Activated CD8-positive, alpha-beta T cell treated with anti-CD3 and anti-CD28 coated beads for 36 hours (primary cell): ENCODE measurements at regions of chr16 and their contacts with region 1.

Region 1: GRCh38 chr16:85821441-85822135 is 22.1 kb downstream of the COX4I1 start:
- DNase-seq: peak; percentile 87
- ATAC-seq: peak; percentile 95
- H3K4me3 Mint-ChIP-seq: no peak overlapping the region
- H3K27ac Mint-ChIP-seq: no peak overlapping the region
- H3K4me1 Mint-ChIP-seq: peaks cover 5% of the 10 kb centered on the region
- H3K27me3 Mint-ChIP-seq: peaks cover 2% of the 10 kb centered on the region
- CTCF ChIP-seq: peak; percentile 96

Region 2: GRCh38 chr16:85652431-85653221 is 169.0 kb before region 1 on chr16:
- CTCF ChIA-PET with region 1: no interaction called
- POLR2A ChIA-PET with region 1: no interaction called
- intact Hi-C with region 1: no loop called
- DNase-seq: peak; percentile 58
- ATAC-seq: peak; percentile 67
- H3K4me3 Mint-ChIP-seq: no peak overlapping the region
- H3K27ac Mint-ChIP-seq: no peak overlapping the region
- H3K4me1 Mint-ChIP-seq: peaks cover 10% of the 10 kb centered on the region
- H3K27me3 Mint-ChIP-seq: no peaks in the 10 kb centered on the region
- CTCF ChIP-seq: no peak

Region 3: DNA sequence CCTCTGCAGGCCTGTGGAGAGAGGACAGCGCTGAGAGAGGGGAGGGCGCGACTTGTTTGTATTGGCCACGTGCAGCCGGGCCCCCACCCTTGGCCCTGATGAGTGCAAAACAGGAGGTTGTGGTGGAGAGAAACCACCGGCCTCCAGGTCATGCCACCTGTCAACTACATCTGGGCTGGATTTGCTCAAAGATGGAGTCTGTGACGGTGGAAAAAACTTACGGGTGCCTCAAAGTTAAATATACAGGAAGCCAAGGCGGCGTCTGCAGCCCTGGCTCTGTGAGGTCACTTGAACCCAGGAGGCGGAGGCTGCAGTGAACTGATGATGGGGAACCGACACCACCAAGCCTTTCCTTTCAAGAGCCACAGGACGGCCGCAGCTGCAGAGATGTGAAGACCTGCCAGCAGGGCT is 86.4 kb before region 1 on chr16:
- CTCF ChIA-PET with region 1: no interaction called
- POLR2A ChIA-PET with region 1: no interaction called
- intact Hi-C with region 1: no loop called
- DNase-seq: peak; percentile 82
- ATAC-seq: peak; percentile 78
- H3K4me3 Mint-ChIP-seq: peak overlapping the region; percentile 21
- H3K27ac Mint-ChIP-seq: peak overlapping the region; percentile 25
- H3K4me1 Mint-ChIP-seq: peaks cover 28% of the 10 kb centered on the region
- H3K27me3 Mint-ChIP-seq: no peaks in the 10 kb centered on the region
- CTCF ChIP-seq: no peak

Region 4: GRCh38 chr16:85853547-85854545 is 32.3 kb after region 1 on chr16:
- CTCF ChIA-PET with region 1: interaction called, 15 read pairs
- POLR2A ChIA-PET with region 1: no interaction called
- intact Hi-C with region 1: no loop called
- DNase-seq: no peak
- ATAC-seq: no peak
- H3K4me3 Mint-ChIP-seq: no peak overlapping the region
- H3K27ac Mint-ChIP-seq: no peak overlapping the region
- H3K4me1 Mint-ChIP-seq: peaks cover 13% of the 10 kb centered on the region
- H3K27me3 Mint-ChIP-seq: no peaks in the 10 kb centered on the region
- CTCF ChIP-seq: no peak

Region 5: DNA sequence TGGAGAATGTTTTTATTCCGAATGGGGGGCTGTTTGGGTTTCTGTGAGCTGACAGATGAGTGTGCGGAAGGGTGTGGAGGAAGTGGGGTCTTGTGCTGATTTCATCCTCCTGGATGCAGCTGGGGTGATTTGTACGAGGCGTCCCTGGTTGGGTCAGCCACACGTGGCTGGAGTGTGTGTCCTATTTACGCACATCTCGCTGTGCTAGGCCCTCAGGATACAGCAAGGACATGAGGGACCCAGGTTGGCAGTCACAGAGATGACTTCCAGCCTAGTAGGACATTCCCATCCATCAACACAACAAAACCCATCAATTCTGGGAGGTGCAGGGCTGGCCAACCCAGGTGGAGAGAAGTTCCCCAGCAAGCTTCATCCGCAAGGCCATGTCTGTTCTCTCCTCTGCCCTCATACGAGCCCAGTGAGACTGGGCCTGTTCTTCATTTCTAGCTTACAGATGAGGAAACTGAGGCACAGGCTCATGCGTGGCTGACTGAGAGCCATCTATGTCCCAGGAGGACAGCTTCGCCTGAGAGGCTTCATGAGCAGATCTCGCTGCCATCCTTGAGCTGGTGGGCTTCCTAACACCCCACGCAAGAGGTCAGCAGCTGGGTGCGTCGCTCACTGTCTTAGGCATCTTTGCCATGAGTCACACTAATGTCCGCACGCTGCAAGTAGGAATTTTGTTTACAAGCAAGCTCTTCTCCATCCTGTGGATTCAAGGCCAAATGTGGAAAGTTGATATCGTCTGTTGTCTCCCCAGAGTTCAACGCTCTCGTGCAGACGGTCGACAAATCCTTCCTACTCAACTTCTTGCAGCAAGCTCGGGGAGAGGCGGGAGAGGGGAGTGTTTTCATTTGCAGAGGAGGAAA is 101.8 kb after region 1 on chr16:
- CTCF ChIA-PET with region 1: interaction called, 16 read pairs
- POLR2A ChIA-PET with region 1: interaction called, 3 read pairs
- intact Hi-C with region 1: no loop called
- DNase-seq: no peak
- ATAC-seq: peak; percentile 22
- H3K4me3 Mint-ChIP-seq: no peak overlapping the region
- H3K27ac Mint-ChIP-seq: peak overlapping the region; percentile 59
- H3K4me1 Mint-ChIP-seq: peaks cover 47% of the 10 kb centered on the region
- H3K27me3 Mint-ChIP-seq: no peaks in the 10 kb centered on the region
- CTCF ChIP-seq: no peak

Region 6: DNA sequence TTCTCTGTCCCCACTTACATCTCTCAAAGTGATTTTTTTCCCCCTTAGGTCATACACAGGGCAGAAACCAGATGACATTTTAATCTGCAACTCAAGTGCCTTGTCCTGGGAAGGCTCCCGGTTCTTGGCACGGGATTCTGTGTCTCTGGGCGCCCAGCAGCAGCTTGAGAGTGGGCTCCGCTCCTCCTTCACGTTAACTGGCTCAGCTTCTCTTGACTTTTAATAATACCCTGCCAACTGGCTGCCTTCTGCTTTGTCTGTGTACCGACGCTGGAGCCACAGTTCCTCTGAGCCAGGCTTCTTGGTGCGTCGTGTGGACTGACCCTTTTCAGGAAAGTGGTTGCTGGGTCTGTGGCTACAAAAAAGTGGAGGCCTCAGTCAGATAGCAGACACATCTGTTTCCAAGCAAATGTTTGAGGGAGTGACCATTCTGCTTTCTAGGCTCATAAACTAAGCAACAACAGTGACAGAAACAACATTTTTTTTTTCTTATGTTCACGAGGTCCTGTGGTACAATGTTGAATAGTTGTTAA is 142.2 kb after region 1 on chr16:
- CTCF ChIA-PET with region 1: interaction called, 18 read pairs
- POLR2A ChIA-PET with region 1: interaction called, 3 read pairs
- intact Hi-C with region 1: no loop called
- DNase-seq: no peak
- ATAC-seq: no peak
- H3K4me3 Mint-ChIP-seq: no peak overlapping the region
- H3K27ac Mint-ChIP-seq: no peak overlapping the region
- H3K4me1 Mint-ChIP-seq: peaks cover 22% of the 10 kb centered on the region
- H3K27me3 Mint-ChIP-seq: no peaks in the 10 kb centered on the region
- CTCF ChIP-seq: no peak

Region 7: GRCh38 chr16:86007524-86007923 is 185.9 kb after region 1 on chr16:
- CTCF ChIA-PET with region 1: interaction called, 180 read pairs
- POLR2A ChIA-PET with region 1: interaction called, 3 read pairs
- intact Hi-C with region 1: no loop called
- DNase-seq: no peak
- ATAC-seq: peak; percentile 68
- H3K4me3 Mint-ChIP-seq: peak overlapping the region; percentile 16
- H3K27ac Mint-ChIP-seq: peak overlapping the region; percentile 76
- H3K4me1 Mint-ChIP-seq: peaks cover 31% of the 10 kb centered on the region
- H3K27me3 Mint-ChIP-seq: peaks cover 4% of the 10 kb centered on the region
- CTCF ChIP-seq: no peak